A673 (cell line): ENCODE measurements at regions of chr1 and their contacts with region 1.

Region 1: GRCh38 chr1:98210064-98210463 is 289.2 kb upstream of the DPYD start:
- DNase-seq: peak; percentile 85
- H3K4me3 ChIP-seq: peak overlapping the region; percentile 0
- H3K27ac ChIP-seq: peak overlapping the region; percentile 82
- H3K4me1 ChIP-seq: peaks cover 25% of the 10 kb centered on the region
- H3K27me3 ChIP-seq: no peaks in the 10 kb centered on the region
- CTCF ChIP-seq: no peak

Region 2: GRCh38 chr1:98143403-98143802 is 66.7 kb before region 1 on chr1:
- CTCF ChIA-PET with region 1: no interaction called
- POLR2A ChIA-PET with region 1: no interaction called
- intact Hi-C with region 1: no loop called
- DNase-seq: no peak
- H3K4me3 ChIP-seq: no peak overlapping the region
- H3K27ac ChIP-seq: no peak overlapping the region
- H3K4me1 ChIP-seq: no peaks in the 10 kb centered on the region
- H3K27me3 ChIP-seq: no peaks in the 10 kb centered on the region
- CTCF ChIP-seq: no peak

Region 3: GRCh38 chr1:98280049-98280448 is 70.0 kb after region 1 on chr1:
- CTCF ChIA-PET with region 1: no interaction called
- POLR2A ChIA-PET with region 1: interaction called, 13 read pairs
- intact Hi-C with region 1: no loop called
- DNase-seq: no peak
- H3K4me3 ChIP-seq: no peak overlapping the region
- H3K27ac ChIP-seq: no peak overlapping the region
- H3K4me1 ChIP-seq: no peaks in the 10 kb centered on the region
- H3K27me3 ChIP-seq: no peaks in the 10 kb centered on the region
- CTCF ChIP-seq: no peak

Region 4: GRCh38 chr1:98323906-98324358 is 113.9 kb after region 1 on chr1:
- CTCF ChIA-PET with region 1: no interaction called
- POLR2A ChIA-PET with region 1: no interaction called
- intact Hi-C with region 1: loop called (anchors 5 kb)
- DNase-seq: peak; percentile 97
- H3K4me3 ChIP-seq: no peak overlapping the region
- H3K27ac ChIP-seq: peak overlapping the region; percentile 94
- H3K4me1 ChIP-seq: peaks cover 55% of the 10 kb centered on the region
- H3K27me3 ChIP-seq: no peaks in the 10 kb centered on the region
- CTCF ChIP-seq: no peak